Heart right ventricle (tissue), 16 donors: ENCODE measurements at regions of chr19 and their contacts with region 1.

Region 1: DNA sequence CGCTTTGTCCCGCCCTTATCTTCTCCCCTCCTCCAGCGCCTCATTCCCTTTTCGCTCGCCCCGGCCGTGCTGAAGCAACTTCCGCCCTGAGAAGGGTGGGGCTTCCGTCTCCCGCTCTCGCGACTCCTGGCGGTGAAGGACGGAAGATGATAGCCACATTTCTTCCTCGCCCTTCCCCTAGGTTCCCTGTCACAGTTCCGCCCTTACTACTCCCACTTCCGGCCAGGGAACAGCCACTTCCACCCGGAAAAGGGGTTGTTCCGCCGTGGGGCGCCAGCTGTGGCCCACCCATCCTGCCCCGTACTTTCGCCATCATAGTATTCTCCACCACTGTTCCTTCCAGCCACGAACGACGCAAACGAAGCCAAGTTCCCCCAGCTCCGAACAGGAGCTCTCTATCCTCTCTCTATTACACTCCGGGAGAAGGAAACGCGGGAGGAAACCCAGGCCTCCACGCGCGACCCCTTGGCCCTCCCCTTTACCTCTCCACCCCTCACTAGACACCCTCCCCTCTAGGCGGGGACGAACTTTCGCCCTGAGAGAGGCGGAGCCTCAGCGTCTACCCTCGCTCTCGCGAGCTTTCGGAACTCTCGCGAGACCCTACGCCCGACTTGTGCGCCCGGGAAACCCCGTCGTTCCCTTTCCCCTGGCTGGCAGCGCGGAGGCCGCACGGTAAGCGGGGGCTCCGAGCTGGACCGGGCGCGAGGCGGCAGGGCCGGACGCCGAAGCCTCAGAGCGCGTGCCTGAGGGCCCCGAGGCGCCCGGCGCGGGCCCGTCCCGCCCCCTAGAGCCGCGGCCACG is at the start of gene RPS19:
- DNase-seq: peak; percentile 99
- ATAC-seq: peak; percentile 93 to 98 (median 97)
- H3K4me3 ChIP-seq: peak within 1 kb of the TSS; percentile 48 to 98 (median 82)
- H3K27ac ChIP-seq: peak within 1 kb of the TSS; percentile 87 to 99 (median 96)
- H3K4me1 ChIP-seq: peaks cover 7 to 48% (median 30%) of the 10 kb centered on the region in 9 donors
- H3K27me3 ChIP-seq: peaks cover 0 to 4% (median 0%) of the 10 kb centered on the region in 7 donors
- CTCF ChIP-seq: peak; percentile 39 to 74 (median 68)
- total RNA-seq, gene RPS19: 446 to 1,030 (median 578) TPM

Region 2: DNA sequence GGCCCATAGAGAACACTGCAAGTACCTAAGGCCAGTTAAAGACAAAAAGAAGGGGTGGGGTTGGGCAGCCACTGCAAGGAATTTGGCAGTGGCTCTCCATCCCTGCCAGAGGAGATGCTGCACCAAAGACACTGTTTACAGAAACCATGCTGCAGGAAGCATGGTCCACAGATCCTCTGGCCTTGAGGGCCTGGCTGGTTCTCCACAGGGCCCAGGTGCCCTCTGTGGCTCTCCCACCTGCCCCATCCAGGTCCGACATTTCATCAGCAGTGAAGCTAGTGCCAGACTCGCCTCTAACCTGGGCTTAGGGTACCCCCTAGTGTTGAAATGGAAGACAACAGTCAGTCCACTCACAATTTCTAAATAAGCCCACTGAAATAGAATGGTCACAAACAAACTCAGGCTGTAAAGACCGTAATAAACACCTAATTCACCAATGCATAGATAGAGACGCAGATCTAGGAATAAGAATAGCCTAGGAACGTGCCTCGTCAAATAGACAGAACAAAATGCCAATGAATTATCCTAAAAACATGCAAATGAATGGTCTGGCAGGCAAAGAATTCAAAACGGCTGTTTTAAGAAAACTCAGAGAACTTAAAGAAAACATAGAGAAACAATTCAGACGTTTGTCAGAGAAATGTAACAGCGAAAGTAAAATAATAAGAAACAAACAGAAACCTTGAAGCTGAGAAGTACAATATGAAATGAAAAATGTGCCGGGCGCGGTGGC is 38.6 kb before region 1 on chr19:
- intact Hi-C with region 1: no loop called
- DNase-seq: no peak
- ATAC-seq: peak in 1 of 8 donors; percentile 45
- H3K4me3 ChIP-seq: no peak overlapping the region
- H3K27ac ChIP-seq: no peak overlapping the region
- H3K4me1 ChIP-seq: no peaks in the 10 kb centered on the region
- H3K27me3 ChIP-seq: peaks cover 0 to 49% (median 20%) of the 10 kb centered on the region in 7 donors
- CTCF ChIP-seq: peak in 7 of 9 donors; percentile 35 to 75 (median 47)

Region 3: GRCh38 chr19:41959056-41960053 is 99.5 kb after region 1 on chr19 and contains the start of gene RABAC1:
- intact Hi-C with region 1: loop called in 3 of 10 experiments (anchors 5 kb)
- DNase-seq: peak; percentile 88 to 93
- ATAC-seq: peak; percentile 89 to 95 (median 94)
- H3K4me3 ChIP-seq: peak within 1 kb of the TSS; percentile 57 to 100 (median 96)
- H3K27ac ChIP-seq: peak within 1 kb of the TSS; percentile 66 to 94 (median 89)
- H3K4me1 ChIP-seq: peaks cover 6 to 34% (median 21%) of the 10 kb centered on the region in 9 donors
- H3K27me3 ChIP-seq: no peaks in the 10 kb centered on the region
- CTCF ChIP-seq: peak in 3 of 9 donors; percentile 8 to 30 (median 22)
- total RNA-seq, gene RABAC1: 34.5 to 117 (median 46.9) TPM

Region 4: GRCh38 chr19:41984961-41985360 is 125.1 kb after region 1 on chr19:
- intact Hi-C with region 1: no loop called
- DNase-seq: no peak
- ATAC-seq: peak in 1 of 8 donors; percentile 11
- H3K4me3 ChIP-seq: no peak overlapping the region
- H3K27ac ChIP-seq: no peak overlapping the region
- H3K4me1 ChIP-seq: peaks cover 0 to under 1% (median 0%) of the 10 kb centered on the region in 9 donors
- H3K27me3 ChIP-seq: no peaks in the 10 kb centered on the region
- CTCF ChIP-seq: no peak

Region 5: GRCh38 chr19:42108527-42109389 is 248.9 kb after region 1 on chr19:
- intact Hi-C with region 1: no loop called
- DNase-seq: peak; percentile 68 to 72
- ATAC-seq: peak; percentile 61 to 86 (median 81)
- H3K4me3 ChIP-seq: no peak overlapping the region
- H3K27ac ChIP-seq: no peak overlapping the region
- H3K4me1 ChIP-seq: peaks cover 0 to 32% (median 10%) of the 10 kb centered on the region in 9 donors
- H3K27me3 ChIP-seq: peaks cover 0 to 26% (median 6%) of the 10 kb centered on the region in 7 donors
- CTCF ChIP-seq: peak; percentile 71 to 100 (median 90)